HCT116 (cell line): ENCODE measurements at regions of chr9 and their contacts with region 1.

Region 1: GRCh38 chr9:132800038-132800648 is 77.9 kb downstream of the AK8 start:
- DNase-seq: peak; percentile 60
- ATAC-seq: peak; percentile 86
- H3K4me3 ChIP-seq: no peak overlapping the region
- H3K27ac ChIP-seq: no peak overlapping the region
- H3K4me1 ChIP-seq: peaks cover 3 to 19% of the 10 kb centered on the region in 2 experiments; a peak in 2 of 4 replicates
- H3K27me3 ChIP-seq: no peaks in the 10 kb centered on the region
- CTCF ChIP-seq: peak; percentile 82 to 93 (median 87)
- POLR2A ChIP-seq: no peak
- RAD21 ChIP-seq: peak; percentile 94

Region 2: GRCh38 chr9:132507746-132508469 is 292.2 kb before region 1 on chr9:
- CTCF ChIA-PET with region 1: no interaction called
- POLR2A ChIA-PET with region 1: no interaction called
- RAD21 ChIA-PET with region 1: no interaction called
- intact Hi-C with region 1: loop called (anchors 1 kb)
- DNase-seq: peak; percentile 37
- ATAC-seq: peak; percentile 96
- H3K4me3 ChIP-seq: no peak overlapping the region
- H3K27ac ChIP-seq: no peak overlapping the region
- H3K4me1 ChIP-seq: no peaks in the 10 kb centered on the region
- H3K27me3 ChIP-seq: no peaks in the 10 kb centered on the region; the same call in 1 of the 2 replicates
- CTCF ChIP-seq: peak; percentile 83 to 84 (median 84); a peak in 5 of 6 replicates
- POLR2A ChIP-seq: no peak
- RAD21 ChIP-seq: peak; percentile 82

Region 3: GRCh38 chr9:132575005-132575609 is 225.0 kb before region 1 on chr9:
- CTCF ChIA-PET with region 1: no interaction called
- POLR2A ChIA-PET with region 1: no interaction called
- RAD21 ChIA-PET with region 1: no interaction called
- intact Hi-C with region 1: loop called (anchors 1 kb)
- DNase-seq: peak; percentile 62
- ATAC-seq: peak; percentile 96
- H3K4me3 ChIP-seq: no peak overlapping the region
- H3K27ac ChIP-seq: no peak overlapping the region
- H3K4me1 ChIP-seq: peaks cover 0 to 6% of the 10 kb centered on the region in 2 experiments; a peak in 2 of 4 replicates
- H3K27me3 ChIP-seq: peaks cover 20% of the 10 kb centered on the region
- CTCF ChIP-seq: peak; percentile 78 to 90 (median 86)
- POLR2A ChIP-seq: no peak
- RAD21 ChIP-seq: peak; percentile 96

Region 4: GRCh38 chr9:132669698-132670456 is 130.3 kb before region 1 on chr9 and contains the start of gene DDX31:
- CTCF ChIA-PET with region 1: no interaction called
- POLR2A ChIA-PET with region 1: no interaction called
- RAD21 ChIA-PET with region 1: no interaction called
- intact Hi-C with region 1: loop called (anchors 5 kb)
- DNase-seq: peak; percentile 46
- ATAC-seq: peak; percentile 89
- H3K4me3 ChIP-seq: peak within 1 kb of the TSS; percentile 92 to 95
- H3K27ac ChIP-seq: peak within 1 kb of the TSS; percentile 100
- H3K4me1 ChIP-seq: peaks cover 2 to 21% of the 10 kb centered on the region in 2 experiments; a peak in 3 of 4 replicates
- H3K27me3 ChIP-seq: no peaks in the 10 kb centered on the region
- CTCF ChIP-seq: no peak
- POLR2A ChIP-seq: peak; percentile 61
- RAD21 ChIP-seq: no peak
- total RNA-seq, gene DDX31: 25.8 TPM

Region 5: DNA sequence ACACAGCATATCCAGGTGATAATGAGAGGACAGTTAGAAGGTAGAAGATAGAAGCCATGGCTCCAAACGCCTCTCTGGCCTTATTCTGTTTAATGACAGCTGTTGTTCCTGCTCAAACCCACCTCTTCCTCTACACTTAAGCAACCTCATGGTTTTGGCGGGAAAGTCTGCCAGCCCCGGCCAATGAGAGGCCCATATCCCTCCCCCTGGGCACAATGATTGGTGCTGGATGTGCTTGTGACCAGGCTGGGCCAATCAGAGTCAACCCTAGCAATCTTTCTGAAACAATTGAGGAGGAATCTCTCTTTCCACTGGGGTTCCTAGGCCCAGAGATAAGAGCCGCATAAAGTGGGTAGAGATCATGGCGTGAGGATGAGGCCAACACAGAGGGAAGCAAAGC is 173.6 kb after region 1 on chr9:
- CTCF ChIA-PET with region 1: no interaction called
- POLR2A ChIA-PET with region 1: no interaction called
- RAD21 ChIA-PET with region 1: no interaction called
- intact Hi-C with region 1: loop called (anchors 1 kb)
- DNase-seq: peak; percentile 8
- ATAC-seq: no peak
- H3K4me3 ChIP-seq: no peak overlapping the region
- H3K27ac ChIP-seq: no peak overlapping the region
- H3K4me1 ChIP-seq: peaks cover 0 to 11% of the 10 kb centered on the region in 2 experiments; a peak in 2 of 4 replicates
- H3K27me3 ChIP-seq: peaks cover 18% of the 10 kb centered on the region; the same call in 1 of the 2 replicates
- CTCF ChIP-seq: no peak
- POLR2A ChIP-seq: no peak
- RAD21 ChIP-seq: no peak

Region 6: GRCh38 chr9:133437753-133438531 is 637.8 kb after region 1 on chr9:
- CTCF ChIA-PET with region 1: no interaction called
- POLR2A ChIA-PET with region 1: no interaction called
- RAD21 ChIA-PET with region 1: no interaction called
- intact Hi-C with region 1: no loop called
- DNase-seq: no peak
- ATAC-seq: no peak
- H3K4me3 ChIP-seq: no peak overlapping the region
- H3K27ac ChIP-seq: no peak overlapping the region
- H3K4me1 ChIP-seq: no peaks in the 10 kb centered on the region
- H3K27me3 ChIP-seq: no peaks in the 10 kb centered on the region
- CTCF ChIP-seq: no peak
- POLR2A ChIP-seq: no peak
- RAD21 ChIP-seq: no peak